SK-N-SH (cell line): ENCODE measurements at regions of chr6 and their contacts with region 1.

Region 1: GRCh38 chr6:145633981-145634627 is 101.2 kb downstream of the EPM2A start:
- DNase-seq: peak; percentile 75
- H3K4me3 ChIP-seq: no peak overlapping the region
- H3K27ac ChIP-seq: no peak overlapping the region
- H3K4me1 ChIP-seq: peaks cover 0 to 3% of the 10 kb centered on the region in 2 experiments; a peak in 2 of 4 replicates
- H3K27me3 ChIP-seq: no peaks in the 10 kb centered on the region
- CTCF ChIP-seq: peak; percentile 82
- EP300 ChIP-seq: no peak
- RAD21 ChIP-seq: peak; percentile 92

Region 2: GRCh38 chr6:145225500-145225899 is 408.6 kb before region 1 on chr6:
- CTCF ChIA-PET with region 1: interaction called, 11 read pairs
- POLR2A ChIA-PET with region 1: no interaction called
- DNase-seq: no peak
- H3K4me3 ChIP-seq: no peak overlapping the region
- H3K27ac ChIP-seq: no peak overlapping the region
- H3K4me1 ChIP-seq: no peaks in the 10 kb centered on the region
- H3K27me3 ChIP-seq: no peaks in the 10 kb centered on the region
- CTCF ChIP-seq: no peak
- EP300 ChIP-seq: no peak
- RAD21 ChIP-seq: no peak

Region 3: DNA sequence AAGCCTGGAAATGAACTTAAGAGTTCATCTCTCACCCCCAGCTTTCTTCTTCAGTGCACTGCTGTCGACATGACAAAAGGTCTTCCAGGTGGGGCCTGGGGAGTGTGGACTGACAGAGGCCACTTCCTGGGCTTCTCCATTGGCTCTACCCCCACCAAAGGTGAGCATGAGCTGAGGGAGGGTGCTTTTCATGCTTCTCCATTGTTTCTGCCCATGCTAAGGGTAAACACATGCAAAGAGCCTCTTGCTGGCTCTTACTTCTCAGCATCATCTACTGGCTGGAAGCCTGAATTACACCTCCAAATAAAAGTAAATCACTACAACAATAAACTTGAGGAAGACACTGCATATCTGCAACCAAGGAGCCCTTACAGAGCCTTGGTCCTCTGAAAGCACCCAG is 126.0 kb before region 1 on chr6:
- CTCF ChIA-PET with region 1: no interaction called
- POLR2A ChIA-PET with region 1: no interaction called
- DNase-seq: no peak
- H3K4me3 ChIP-seq: no peak overlapping the region
- H3K27ac ChIP-seq: no peak overlapping the region
- H3K4me1 ChIP-seq: no peaks in the 10 kb centered on the region
- H3K27me3 ChIP-seq: no peaks in the 10 kb centered on the region
- CTCF ChIP-seq: no peak
- EP300 ChIP-seq: no peak
- RAD21 ChIP-seq: no peak

Region 4: GRCh38 chr6:145602726-145603326 is 31.3 kb before region 1 on chr6:
- CTCF ChIA-PET with region 1: interaction called, 14 read pairs
- POLR2A ChIA-PET with region 1: no interaction called
- DNase-seq: peak; percentile 34
- H3K4me3 ChIP-seq: no peak overlapping the region
- H3K27ac ChIP-seq: peak overlapping the region in 1 of 2 experiments; percentile 91; a peak in 2 of 4 replicates
- H3K4me1 ChIP-seq: peaks cover 0 to 9% of the 10 kb centered on the region in 2 experiments; a peak in 2 of 4 replicates
- H3K27me3 ChIP-seq: no peaks in the 10 kb centered on the region
- CTCF ChIP-seq: no peak
- EP300 ChIP-seq: no peak
- RAD21 ChIP-seq: peak; percentile 48